ENCODE measurements at regions of chr14 and their contacts with region 1.

Region 1: GRCh38 chr14:91123201-91123600 is 9.3 kb downstream of the DGLUCY start:
- DNase-seq: peak in 1 of 5 donors; percentile 32
- ATAC-seq: peak in 1 of 4 donors; percentile 32
- H3K4me3 ChIP-seq: no peak overlapping the region
- H3K27ac ChIP-seq: peak overlapping the region in 10 of 12 donors; percentile 6 to 84 (median 48)
- H3K4me1 ChIP-seq: peaks cover 0 to 81% (median 54%) of the 10 kb centered on the region in 12 donors
- H3K27me3 ChIP-seq: no peaks in the 10 kb centered on the region
- CTCF ChIP-seq: no peak
- POLR2A ChIP-seq: no peak

Region 2: GRCh38 chr14:90985601-90986242 is 137.5 kb before region 1 on chr14:
- intact Hi-C with region 1: no loop called
- DNase-seq: no peak
- ATAC-seq: no peak
- H3K4me3 ChIP-seq: no peak overlapping the region
- H3K27ac ChIP-seq: no peak overlapping the region
- H3K4me1 ChIP-seq: no peaks in the 10 kb centered on the region
- H3K27me3 ChIP-seq: no peaks in the 10 kb centered on the region
- CTCF ChIP-seq: no peak
- POLR2A ChIP-seq: no peak

Region 3: DNA sequence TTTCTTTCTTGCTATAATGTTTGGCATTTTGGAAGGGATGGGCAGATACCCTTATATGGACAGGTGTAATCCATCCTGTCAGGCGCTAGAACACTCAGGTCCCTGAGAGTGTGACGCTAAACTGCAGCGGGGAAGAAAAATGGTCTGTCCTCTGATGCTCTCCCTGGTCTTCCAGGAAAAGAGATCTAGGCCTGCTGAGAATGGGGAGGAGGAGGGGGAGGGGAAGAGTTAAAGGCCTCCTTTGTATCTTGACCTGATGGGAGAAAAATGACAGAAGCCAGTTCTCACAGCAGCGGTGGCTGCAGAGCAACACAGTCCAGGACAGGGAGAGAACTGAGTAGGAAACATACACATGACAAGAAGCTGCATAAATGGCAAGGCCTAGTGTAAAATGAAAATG is 123.9 kb before region 1 on chr14:
- intact Hi-C with region 1: no loop called
- DNase-seq: no peak
- ATAC-seq: no peak
- H3K4me3 ChIP-seq: no peak overlapping the region
- H3K27ac ChIP-seq: no peak overlapping the region
- H3K4me1 ChIP-seq: no peaks in the 10 kb centered on the region
- H3K27me3 ChIP-seq: no peaks in the 10 kb centered on the region
- CTCF ChIP-seq: no peak
- POLR2A ChIP-seq: no peak

Region 4: DNA sequence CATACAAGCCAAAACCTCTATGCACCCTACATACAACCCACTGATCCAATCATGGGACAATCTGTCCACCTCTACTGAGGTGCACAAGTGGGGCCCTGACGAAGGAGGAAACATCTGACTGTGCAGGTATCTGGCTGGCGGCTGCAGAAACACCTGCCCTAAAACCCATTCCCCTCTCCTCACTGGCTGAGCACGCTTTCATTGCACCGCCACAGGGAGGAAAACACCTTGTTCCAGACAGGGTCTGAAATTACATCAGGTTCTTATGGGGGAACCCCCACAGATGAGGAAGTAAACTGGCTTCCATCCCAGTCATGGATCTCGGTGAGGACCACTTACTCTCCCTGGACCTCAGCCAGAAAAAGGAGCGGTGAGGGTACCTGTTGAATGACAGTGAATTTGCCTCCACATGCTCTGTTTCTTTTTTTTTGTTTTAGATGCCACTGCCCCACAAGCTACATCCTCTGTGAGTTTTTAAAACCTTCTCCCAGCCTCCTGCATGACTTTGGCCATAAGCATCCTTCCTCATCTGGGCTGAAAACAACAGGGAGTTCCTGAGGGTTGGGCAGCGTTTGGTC is 33.2 kb before region 1 on chr14:
- intact Hi-C with region 1: loop called in 1 of 10 experiments (anchors 2 kb)
- DNase-seq: no peak
- ATAC-seq: no peak
- H3K4me3 ChIP-seq: no peak overlapping the region
- H3K27ac ChIP-seq: no peak overlapping the region
- H3K4me1 ChIP-seq: no peaks in the 10 kb centered on the region
- H3K27me3 ChIP-seq: no peaks in the 10 kb centered on the region
- CTCF ChIP-seq: no peak
- POLR2A ChIP-seq: no peak

Region 5: GRCh38 chr14:91202234-91202974 is 79.2 kb after region 1 on chr14:
- intact Hi-C with region 1: no loop called
- DNase-seq: peak in 4 of 5 donors; percentile 33 to 70 (median 60)
- ATAC-seq: peak; percentile 32 to 82 (median 78)
- H3K4me3 ChIP-seq: no peak overlapping the region
- H3K27ac ChIP-seq: peak overlapping the region in 10 of 12 donors; percentile 2 to 83 (median 42)
- H3K4me1 ChIP-seq: peaks cover 0 to 24% (median 11%) of the 10 kb centered on the region in 12 donors
- H3K27me3 ChIP-seq: no peaks in the 10 kb centered on the region
- CTCF ChIP-seq: no peak
- POLR2A ChIP-seq: no peak

Measured in heart left ventricle (tissue), 16 donors.